Right lobe of liver (tissue), 6 donors: ENCODE measurements at regions of chr11 and their contacts with region 1.

Region 1: DNA sequence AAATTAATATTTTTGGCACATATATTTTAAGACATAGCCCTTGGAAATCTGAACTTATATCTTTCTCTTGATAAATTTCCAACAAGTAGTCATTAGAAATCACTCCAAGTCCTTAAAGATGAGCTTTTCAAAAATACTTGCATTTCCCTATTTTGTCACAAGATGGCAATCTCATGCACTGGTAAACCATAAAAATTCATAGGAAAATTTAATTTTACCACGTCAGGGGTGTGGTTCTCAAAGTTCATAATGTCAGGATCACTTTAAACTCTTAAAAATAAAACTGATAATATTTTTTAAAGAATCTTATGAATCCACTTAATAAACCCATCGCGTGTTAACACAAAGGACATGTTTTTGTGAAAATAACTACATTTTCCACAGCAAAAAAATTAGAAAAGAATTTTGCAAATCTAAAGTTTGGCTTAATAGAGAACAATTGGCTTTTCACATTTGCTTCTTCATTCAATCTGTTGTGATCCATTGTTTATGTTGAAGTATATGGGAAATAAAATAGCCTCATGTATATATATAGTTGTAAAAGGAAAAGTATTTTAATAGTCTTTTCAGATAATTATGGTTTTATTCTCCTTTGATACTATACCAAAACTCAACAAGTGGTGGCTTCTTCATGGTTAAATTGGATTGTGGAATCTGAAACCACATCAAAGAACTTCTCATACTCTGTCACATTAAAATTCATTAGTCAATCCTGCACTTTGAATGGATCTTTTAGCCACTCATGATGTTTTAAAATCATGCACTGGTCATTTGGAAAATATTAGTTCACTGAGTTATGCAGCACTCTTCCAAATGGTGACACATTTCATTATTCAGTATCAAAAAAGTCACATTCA is 169.1 kb downstream of the CADM1 start:
- DNase-seq: no peak
- ATAC-seq: peak in 3 of 4 donors; percentile 46 to 63 (median 51)
- H3K4me3 ChIP-seq: no peak overlapping the region
- H3K27ac ChIP-seq: no peak overlapping the region
- H3K4me1 ChIP-seq: no peaks in the 10 kb centered on the region
- H3K27me3 ChIP-seq: no peaks in the 10 kb centered on the region
- CTCF ChIP-seq: peak; percentile 70 to 82 (median 73)
- POLR2A ChIP-seq: no peak

Region 2: DNA sequence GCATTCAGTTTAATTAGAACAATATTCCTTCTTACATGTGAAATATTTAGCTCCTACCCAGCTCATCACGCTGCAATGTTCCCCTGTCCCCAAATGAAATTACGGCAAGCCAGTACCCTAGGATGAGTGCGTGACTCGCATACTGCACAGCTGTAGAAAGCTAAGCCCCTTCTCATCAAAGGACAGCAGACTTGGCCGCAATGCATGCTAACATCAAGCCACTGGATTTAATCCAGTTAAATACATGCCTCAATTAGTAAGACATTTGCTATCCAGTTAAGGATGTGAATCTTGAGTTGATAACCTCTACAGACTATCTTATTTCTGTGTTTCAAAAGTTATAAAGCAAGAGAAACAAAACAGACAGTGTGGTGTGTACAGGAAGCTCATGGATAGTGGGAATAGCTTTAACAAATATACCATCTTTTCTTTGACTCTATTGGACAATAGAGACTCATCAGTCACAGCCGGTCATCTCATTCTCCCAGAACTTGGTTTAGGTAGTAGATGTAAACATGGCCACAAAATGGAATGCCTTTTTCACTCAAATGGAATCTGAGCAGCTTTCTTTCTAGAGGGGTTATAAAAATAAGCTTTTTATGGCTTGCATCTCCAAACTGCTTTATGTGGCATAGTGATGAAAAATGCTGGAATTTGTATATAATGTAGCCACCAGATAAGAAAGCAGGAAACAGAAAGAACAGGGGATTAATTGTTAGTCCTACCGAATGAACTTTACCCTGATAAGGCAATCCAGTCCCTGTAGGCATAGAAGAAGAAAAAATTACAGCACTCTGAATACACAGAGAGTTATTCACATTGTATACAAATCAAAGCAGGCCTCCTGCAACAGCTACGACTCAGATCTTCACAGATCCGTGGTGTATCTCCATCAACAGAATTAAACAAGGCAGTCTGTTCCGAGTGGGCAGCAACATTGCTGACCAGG is 55.1 kb before region 1 on chr11:
- intact Hi-C with region 1: no loop called
- DNase-seq: no peak
- ATAC-seq: peak in 3 of 4 donors; percentile 12 to 91 (median 35)
- H3K4me3 ChIP-seq: no peak overlapping the region
- H3K27ac ChIP-seq: no peak overlapping the region
- H3K4me1 ChIP-seq: peaks cover 0 to 3% (median 0%) of the 10 kb centered on the region in 4 donors
- H3K27me3 ChIP-seq: no peaks in the 10 kb centered on the region
- CTCF ChIP-seq: no peak
- POLR2A ChIP-seq: no peak

Region 3: DNA sequence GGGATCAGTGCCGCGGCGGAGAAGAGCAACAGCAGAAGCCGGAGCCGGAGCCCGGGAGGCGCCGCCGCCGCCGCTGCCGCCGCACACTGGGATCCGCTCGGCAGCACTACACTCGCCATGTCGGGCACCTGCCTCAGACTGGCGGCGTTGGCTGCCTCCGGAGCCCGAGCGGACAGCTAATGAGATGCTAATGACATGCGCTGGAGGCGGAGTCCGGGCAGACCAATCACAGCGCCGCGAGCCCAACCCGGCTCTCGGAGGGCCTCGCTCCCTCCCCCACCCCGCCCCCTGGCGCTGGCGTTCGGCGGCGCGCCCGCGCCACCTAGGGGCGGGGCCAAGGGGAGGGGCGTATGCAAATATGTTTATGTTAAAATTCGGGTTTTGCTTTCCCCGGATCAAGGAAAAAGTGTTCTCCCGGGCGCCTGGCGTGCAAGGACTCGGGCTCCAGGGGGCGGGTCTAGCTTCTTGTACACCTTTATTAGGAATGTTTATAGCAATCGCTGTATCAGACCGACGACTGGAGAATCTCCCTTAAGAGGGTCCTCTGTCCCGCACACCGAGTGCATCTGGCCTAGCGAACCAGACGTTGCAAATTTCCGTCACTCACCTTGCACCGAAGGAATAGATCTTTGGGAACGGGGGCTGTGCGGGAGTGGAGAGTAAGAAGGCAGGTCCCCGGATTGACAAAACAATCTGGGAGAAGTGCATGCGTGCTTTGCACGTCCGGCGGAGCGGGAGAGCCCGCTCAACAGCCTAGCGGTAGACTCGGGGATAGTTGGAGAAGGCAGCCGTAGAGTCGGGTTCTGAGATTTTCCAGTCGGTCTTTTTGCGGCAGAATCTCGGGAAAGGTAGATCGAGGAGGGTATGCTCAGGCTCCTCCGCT is 169.4 kb after region 1 on chr11 and contains the start of gene CADM1:
- intact Hi-C with region 1: loop called in 1 of 2 experiments (anchors 10 kb)
- DNase-seq: peak; percentile 96 to 98 (median 98)
- ATAC-seq: peak; percentile 83 to 92 (median 86)
- H3K4me3 ChIP-seq: peak within 1 kb of the TSS; percentile 69 to 71 (median 69)
- H3K27ac ChIP-seq: peak within 1 kb of the TSS; percentile 83 to 92 (median 88)
- H3K4me1 ChIP-seq: peaks cover 0 to 23% (median 1%) of the 10 kb centered on the region in 4 donors
- H3K27me3 ChIP-seq: no peaks in the 10 kb centered on the region
- CTCF ChIP-seq: peak; percentile 60 to 73 (median 66)
- POLR2A ChIP-seq: peak; percentile 98
- total RNA-seq, gene CADM1: 21.1 to 56.7 (median 30.6) TPM